ENCODE measurements at regions of chr13 and their contacts with region 1.

Region 1: DNA sequence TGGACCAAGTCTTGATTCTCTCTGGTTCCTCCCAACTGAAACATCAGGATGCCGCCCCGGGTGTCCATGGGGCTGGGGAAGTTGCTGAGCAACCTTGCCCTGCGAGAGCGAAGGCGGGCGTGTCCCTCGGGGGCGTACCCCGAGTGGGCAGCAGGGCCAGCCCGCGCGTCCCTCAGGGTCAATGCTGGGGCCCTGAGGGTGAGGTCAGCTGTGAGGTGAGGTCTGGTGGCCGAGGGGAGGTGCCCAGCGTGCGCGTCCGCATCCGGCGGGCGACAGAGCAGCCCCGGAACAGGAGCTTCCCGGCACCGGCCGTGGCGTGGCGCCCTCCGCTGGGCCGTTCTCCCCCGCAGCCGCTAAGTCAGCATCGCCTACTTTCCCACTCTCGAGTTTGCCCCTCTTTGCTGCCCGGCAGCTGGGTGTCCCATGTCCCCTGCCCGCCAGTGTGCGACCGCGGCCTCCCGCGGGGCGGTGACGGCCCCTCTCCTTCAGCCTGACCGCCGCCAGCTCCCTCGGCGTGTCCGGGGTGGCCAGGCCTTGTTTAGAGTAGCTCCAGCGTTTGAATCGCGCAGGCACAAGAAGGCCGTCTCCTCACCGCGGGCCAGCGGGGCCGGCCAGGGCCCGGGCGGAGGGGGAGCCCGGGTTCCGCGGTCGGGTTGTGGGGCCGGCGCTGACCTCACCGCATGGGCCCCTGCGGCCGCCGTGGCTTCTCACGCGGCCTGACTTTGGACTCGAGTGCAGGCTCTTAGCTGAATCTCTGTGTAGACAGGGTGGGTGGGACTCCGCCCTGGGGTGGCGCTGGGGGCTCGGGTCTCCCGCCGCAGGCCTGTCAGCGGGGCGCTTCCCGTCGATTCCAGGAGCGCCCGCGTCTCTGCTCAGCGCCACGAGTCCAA is 33.0 kb downstream of the GJA3 start:
- DNase-seq: peak in 4 of 5 donors; percentile 26 to 55 (median 38)
- H3K4me3 ChIP-seq: peak overlapping the region; percentile 63
- H3K4me3 Mint-ChIP-seq: peak overlapping the region; percentile 61 to 77 (median 72)
- H3K27ac ChIP-seq: no peak overlapping the region
- H3K27ac Mint-ChIP-seq: no peak overlapping the region
- H3K4me1 ChIP-seq: peaks cover 8% of the 10 kb centered on the region
- H3K4me1 Mint-ChIP-seq: peaks cover 4 to 6% (median 6%) of the 10 kb centered on the region in 3 donors
- H3K27me3 ChIP-seq: peaks cover 15% of the 10 kb centered on the region
- H3K27me3 Mint-ChIP-seq: peaks cover 10 to 25% of the 10 kb centered on the region in 2 donors

Region 2: DNA sequence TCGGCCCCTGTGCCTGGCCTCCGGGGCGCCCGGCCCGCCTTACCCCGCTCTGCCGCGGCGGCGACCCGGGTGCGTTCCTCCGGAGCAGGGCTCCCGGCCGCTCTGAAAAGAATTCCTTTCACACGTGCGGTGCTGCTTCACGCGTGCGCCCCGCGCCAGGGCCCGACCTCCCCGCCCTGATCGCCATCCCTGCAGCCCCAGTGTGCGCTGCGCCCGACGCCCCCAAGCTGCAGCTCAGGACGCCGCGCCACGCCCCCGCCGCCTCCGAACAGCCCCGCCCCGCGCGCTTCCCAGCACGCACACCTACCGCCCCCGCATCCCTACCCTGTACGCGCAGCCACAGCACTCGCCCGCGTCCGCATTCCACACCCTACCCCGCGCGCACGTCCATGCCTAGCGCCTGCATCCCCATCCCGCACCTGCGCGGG is 33.0 kb after region 1 on chr13 and contains the start of gene GJA3:
- CTCF ChIA-PET with region 1: interaction called, 15 read pairs
- POLR2A ChIA-PET with region 1: no interaction called
- DNase-seq: peak; percentile 36 to 76 (median 54)
- H3K4me3 ChIP-seq: no peak within 1 kb of the TSS
- H3K4me3 Mint-ChIP-seq: peak within 1 kb of the TSS; percentile 82 to 90 (median 87)
- H3K27ac ChIP-seq: no peak within 1 kb of the TSS
- H3K27ac Mint-ChIP-seq: peak within 1 kb of the TSS in 7 of 8 donors; percentile 4 to 73 (median 45)
- H3K4me1 ChIP-seq: peaks cover 6% of the 10 kb centered on the region
- H3K4me1 Mint-ChIP-seq: peaks cover 8 to 23% (median 19%) of the 10 kb centered on the region in 3 donors
- H3K27me3 ChIP-seq: peaks cover 20% of the 10 kb centered on the region
- H3K27me3 Mint-ChIP-seq: peaks cover 22 to 48% of the 10 kb centered on the region in 2 donors
- total RNA-seq, gene GJA3: 0.85 to 1.0 TPM

Region 3: GRCh38 chr13:20209948-20210347 is 82.1 kb after region 1 on chr13:
- CTCF ChIA-PET with region 1: no interaction called
- POLR2A ChIA-PET with region 1: no interaction called
- DNase-seq: no peak
- H3K4me3 ChIP-seq: no peak overlapping the region
- H3K4me3 Mint-ChIP-seq: no peak overlapping the region
- H3K27ac ChIP-seq: no peak overlapping the region
- H3K27ac Mint-ChIP-seq: peak overlapping the region in 1 of 8 donors; percentile 64
- H3K4me1 ChIP-seq: no peaks in the 10 kb centered on the region
- H3K4me1 Mint-ChIP-seq: no peaks in the 10 kb centered on the region
- H3K27me3 ChIP-seq: no peaks in the 10 kb centered on the region
- H3K27me3 Mint-ChIP-seq: peaks cover 13 to 44% of the 10 kb centered on the region in 2 donors

Region 4: DNA sequence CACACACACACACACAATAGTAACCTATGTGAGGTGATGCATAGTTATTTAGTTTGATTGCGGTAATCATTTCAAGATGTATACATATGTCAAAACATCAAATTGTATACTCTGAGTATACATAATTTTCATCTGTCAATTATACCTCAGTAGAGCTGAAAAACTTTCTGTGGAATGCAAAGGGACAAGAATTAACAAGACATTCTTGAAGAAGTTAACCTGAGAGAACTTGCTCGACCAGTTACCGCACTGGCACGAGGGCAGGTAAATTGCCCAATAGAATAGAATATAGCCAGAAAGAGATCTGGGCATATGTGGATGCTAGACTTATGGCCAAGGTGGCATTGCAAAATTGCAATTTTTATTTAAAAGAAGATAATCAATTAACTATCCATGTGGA is 146.6 kb after region 1 on chr13:
- CTCF ChIA-PET with region 1: no interaction called
- POLR2A ChIA-PET with region 1: no interaction called
- DNase-seq: no peak
- H3K4me3 ChIP-seq: no peak overlapping the region
- H3K4me3 Mint-ChIP-seq: no peak overlapping the region
- H3K27ac ChIP-seq: no peak overlapping the region
- H3K27ac Mint-ChIP-seq: no peak overlapping the region
- H3K4me1 ChIP-seq: no peaks in the 10 kb centered on the region
- H3K4me1 Mint-ChIP-seq: no peaks in the 10 kb centered on the region
- H3K27me3 ChIP-seq: no peaks in the 10 kb centered on the region
- H3K27me3 Mint-ChIP-seq: peaks cover 10 to 34% of the 10 kb centered on the region in 2 donors